Adrenal gland (tissue), 19 donors: ENCODE measurements at regions of chr5 and their contacts with region 1.

Region 1: DNA sequence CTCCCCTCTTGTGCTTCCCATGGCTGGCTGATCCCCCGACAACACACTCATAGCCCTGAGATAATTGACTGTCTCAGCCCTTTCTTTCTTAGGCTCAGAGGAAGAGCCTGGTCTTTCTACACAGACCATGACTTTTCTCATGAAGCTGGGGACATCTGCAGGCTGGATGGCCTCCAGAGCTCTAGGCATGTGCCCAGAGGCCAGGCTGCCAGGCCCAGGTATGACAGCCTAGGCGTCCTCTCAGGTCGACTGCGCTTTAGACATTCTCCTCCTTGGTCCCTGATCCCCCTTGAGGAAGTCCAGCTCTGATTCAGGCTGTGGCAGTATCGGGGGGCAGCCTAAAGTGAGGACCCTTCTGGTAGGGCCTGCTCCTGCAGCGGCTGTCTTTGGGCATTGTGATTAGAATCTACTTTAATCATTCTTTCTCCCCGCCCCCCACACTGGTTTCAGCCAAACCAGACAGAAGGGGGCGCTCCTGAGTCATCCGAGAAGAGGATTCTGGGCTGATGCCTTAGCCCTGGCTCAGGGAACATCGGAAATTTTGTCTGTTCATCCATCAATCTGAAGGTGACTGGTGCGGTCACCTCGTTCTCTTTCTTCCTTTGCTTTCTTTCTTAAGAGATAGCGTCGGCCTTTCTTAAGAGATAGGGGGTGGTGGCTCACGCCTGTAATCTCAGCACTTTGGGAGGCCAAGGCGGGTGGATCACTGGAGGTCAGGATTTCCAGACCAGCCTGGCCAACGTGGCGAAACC is 66.5 kb upstream of the HSPA9 start:
- DNase-seq: peak; percentile 84 to 94 (median 91)
- H3K4me3 ChIP-seq: no peak overlapping the region
- H3K27ac ChIP-seq: peak overlapping the region in 1 of 5 donors; percentile 65
- H3K4me1 ChIP-seq: no peaks in the 10 kb centered on the region
- H3K27me3 ChIP-seq: no peaks in the 10 kb centered on the region
- CTCF ChIP-seq: peak; percentile 83 to 92 (median 88)
- POLR2A ChIP-seq: no peak

Region 2: DNA sequence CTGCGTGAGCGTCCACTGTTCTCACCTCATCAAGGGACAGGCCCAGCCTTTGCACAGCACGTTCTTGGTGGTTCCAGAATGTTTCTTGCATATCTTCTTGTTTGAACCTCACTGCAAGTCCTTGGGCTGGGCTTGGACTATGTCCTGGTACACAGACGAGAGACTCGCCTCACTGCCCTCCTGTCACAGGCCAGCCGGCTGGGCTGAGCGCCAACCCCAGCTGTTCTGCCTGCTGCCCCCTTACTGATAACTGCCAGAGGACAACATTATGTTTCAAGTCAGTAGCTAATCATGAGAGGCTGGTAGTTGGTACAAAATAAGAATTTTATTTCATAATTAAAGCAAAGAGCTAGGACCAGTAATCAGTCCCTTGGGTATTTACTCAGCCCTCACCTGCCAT is 286.3 kb after region 1 on chr5:
- intact Hi-C with region 1: loop called in 1 of 2 experiments (anchors 10 kb)
- DNase-seq: peak; percentile 79 to 95 (median 89)
- H3K4me3 ChIP-seq: no peak overlapping the region
- H3K27ac ChIP-seq: peak overlapping the region in 4 of 5 donors; percentile 8 to 72 (median 38)
- H3K4me1 ChIP-seq: peaks cover 11 to 14% of the 10 kb centered on the region in 2 donors
- H3K27me3 ChIP-seq: no peaks in the 10 kb centered on the region
- CTCF ChIP-seq: no peak
- POLR2A ChIP-seq: no peak

Region 3: GRCh38 chr5:139262742-139263445 is 621.2 kb after region 1 on chr5:
- intact Hi-C with region 1: loop called (anchors 5 to 10 kb)
- DNase-seq: peak; percentile 87 to 97 (median 93)
- H3K4me3 ChIP-seq: no peak overlapping the region
- H3K27ac ChIP-seq: peak overlapping the region in 2 of 5 donors; percentile 13 to 27
- H3K4me1 ChIP-seq: peaks cover 1 to 14% of the 10 kb centered on the region in 2 donors
- H3K27me3 ChIP-seq: no peaks in the 10 kb centered on the region
- CTCF ChIP-seq: peak; percentile 74 to 97 (median 89)
- POLR2A ChIP-seq: no peak